Ascending aorta (tissue), 2 donors: ENCODE measurements at regions of chr18 and their contacts with region 1.

Region 1: GRCh38 chr18:10131460-10132395 is 217.9 kb downstream of the VAPA start:
- DNase-seq: no peak
- H3K4me3 ChIP-seq: peak overlapping the region; percentile 58 to 63
- H3K27ac ChIP-seq: no peak overlapping the region
- H3K4me1 ChIP-seq: peaks cover 6 to 9% of the 10 kb centered on the region in 2 donors
- H3K27me3 ChIP-seq: no peaks in the 10 kb centered on the region
- CTCF ChIP-seq: no peak

Region 2: GRCh38 chr18:10051877-10052631 is 79.7 kb before region 1 on chr18:
- intact Hi-C with region 1: loop called (anchors 5 kb)
- DNase-seq: peak in 1 of 2 donors; percentile 83
- H3K4me3 ChIP-seq: no peak overlapping the region
- H3K27ac ChIP-seq: peak overlapping the region; percentile 42 to 55
- H3K4me1 ChIP-seq: peaks cover 4 to 21% of the 10 kb centered on the region in 2 donors
- H3K27me3 ChIP-seq: no peaks in the 10 kb centered on the region
- CTCF ChIP-seq: no peak

Region 3: GRCh38 chr18:10242936-10243680 is 111.4 kb after region 1 on chr18:
- intact Hi-C with region 1: no loop called
- DNase-seq: no peak
- H3K4me3 ChIP-seq: no peak overlapping the region
- H3K27ac ChIP-seq: no peak overlapping the region
- H3K4me1 ChIP-seq: peaks cover 0 to 11% of the 10 kb centered on the region in 2 donors
- H3K27me3 ChIP-seq: no peaks in the 10 kb centered on the region
- CTCF ChIP-seq: no peak